ENCODE measurements at regions of chr13 and their contacts with region 1.

Region 1: DNA sequence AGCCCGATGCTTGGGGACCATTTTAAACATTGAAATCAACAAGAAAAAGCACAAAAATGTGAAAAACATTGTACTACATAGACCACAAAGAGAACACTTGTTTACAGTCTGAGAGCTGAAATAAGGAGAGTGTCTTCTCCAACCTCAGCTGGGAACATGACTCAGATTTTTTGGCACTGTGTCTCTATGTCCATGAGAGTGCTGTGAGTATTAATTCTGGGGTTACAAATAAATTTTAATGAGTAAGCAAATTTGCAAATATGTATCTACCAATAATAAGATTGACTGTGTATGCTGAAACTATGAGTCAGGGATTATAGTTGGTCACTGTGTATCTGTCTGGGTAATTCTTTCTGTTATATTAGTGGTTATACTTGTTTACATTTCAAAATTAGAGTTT is 174.0 kb downstream of the DCT start:
- DNase-seq: peak; percentile 90
- ATAC-seq: peak; percentile 79
- H3K4me3 ChIP-seq: no peak overlapping the region
- H3K27ac ChIP-seq: no peak overlapping the region
- H3K4me1 ChIP-seq: peaks cover 10% of the 10 kb centered on the region
- H3K27me3 ChIP-seq: no peaks in the 10 kb centered on the region
- CTCF ChIP-seq: no peak
- POLR2A ChIP-seq: no peak
- RAD21 ChIP-seq: no peak

Region 2: GRCh38 chr13:94251831-94252608 is 53.4 kb before region 1 on chr13:
- CTCF ChIA-PET with region 1: no interaction called
- POLR2A ChIA-PET with region 1: no interaction called
- dilution Hi-C with region 1: no loop called
- in situ Hi-C with region 1: no loop called
- intact Hi-C with region 1: loop called (anchors 5 kb)
- DNase-seq: peak; percentile 26
- ATAC-seq: no peak; the same call in 1 of the 2 replicates
- H3K4me3 ChIP-seq: no peak overlapping the region
- H3K27ac ChIP-seq: no peak overlapping the region
- H3K4me1 ChIP-seq: no peaks in the 10 kb centered on the region; the same call in none of the 2 replicates
- H3K27me3 ChIP-seq: no peaks in the 10 kb centered on the region
- CTCF ChIP-seq: no peak
- POLR2A ChIP-seq: no peak
- RAD21 ChIP-seq: no peak

Measured in IMR-90 (cell line).